Heart right ventricle (tissue), 16 donors: ENCODE measurements at regions of chr13 and their contacts with region 1.

Region 1: GRCh38 chr13:36395280-36395679 is 37.0 kb upstream of the CCNA1 start:
- DNase-seq: no peak
- ATAC-seq: peak in 4 of 8 donors; percentile 33 to 74 (median 67)
- H3K4me3 ChIP-seq: no peak overlapping the region
- H3K27ac ChIP-seq: no peak overlapping the region
- H3K4me1 ChIP-seq: no peaks in the 10 kb centered on the region
- H3K27me3 ChIP-seq: peaks cover 0 to 6% (median 0%) of the 10 kb centered on the region in 7 donors
- CTCF ChIP-seq: peak in 8 of 9 donors; percentile 24 to 56 (median 50)

Region 2: GRCh38 chr13:36282818-36283445 is 112.3 kb before region 1 on chr13:
- intact Hi-C with region 1: loop called in 8 of 10 experiments (anchors 2 to 10 kb)
- DNase-seq: no peak
- ATAC-seq: peak in 2 of 8 donors; percentile 57 to 61
- H3K4me3 ChIP-seq: no peak overlapping the region
- H3K27ac ChIP-seq: no peak overlapping the region
- H3K4me1 ChIP-seq: peaks cover 0 to 4% (median 0%) of the 10 kb centered on the region in 9 donors
- H3K27me3 ChIP-seq: no peaks in the 10 kb centered on the region
- CTCF ChIP-seq: peak; percentile 55 to 86 (median 79)

Region 3: DNA sequence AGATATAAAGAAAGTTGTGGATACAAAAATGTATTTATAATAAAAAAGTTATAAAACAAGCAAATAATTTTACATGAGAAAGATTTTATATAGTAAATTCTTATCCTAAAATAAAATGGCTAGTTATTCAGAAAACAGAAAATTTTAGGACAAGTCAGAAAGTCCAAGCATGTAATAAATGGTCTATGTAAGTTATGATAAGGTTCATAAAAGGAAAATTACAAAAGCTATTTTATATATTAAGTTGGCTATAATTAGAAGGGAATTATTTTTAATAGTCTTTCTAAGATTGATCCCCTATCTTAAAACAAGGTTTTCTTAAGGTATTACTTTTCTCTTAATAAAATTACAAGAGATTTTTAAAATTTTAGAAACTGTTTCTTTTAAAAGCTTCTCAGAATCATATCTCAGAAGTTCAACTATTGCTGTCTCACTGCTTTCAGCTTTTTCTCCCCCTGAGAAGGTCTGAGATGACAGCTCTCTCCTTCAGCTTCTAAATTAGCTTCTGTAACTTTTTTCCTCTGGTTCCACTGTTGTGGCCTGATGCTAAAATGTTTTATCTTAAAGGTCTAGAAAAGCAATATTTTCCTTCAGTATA is 106.4 kb before region 1 on chr13:
- intact Hi-C with region 1: loop called in 7 of 10 experiments (anchors 5 to 10 kb)
- DNase-seq: no peak
- ATAC-seq: no peak
- H3K4me3 ChIP-seq: no peak overlapping the region
- H3K27ac ChIP-seq: no peak overlapping the region
- H3K4me1 ChIP-seq: no peaks in the 10 kb centered on the region
- H3K27me3 ChIP-seq: peaks cover 0 to 3% (median 0%) of the 10 kb centered on the region in 7 donors
- CTCF ChIP-seq: no peak

Region 4: DNA sequence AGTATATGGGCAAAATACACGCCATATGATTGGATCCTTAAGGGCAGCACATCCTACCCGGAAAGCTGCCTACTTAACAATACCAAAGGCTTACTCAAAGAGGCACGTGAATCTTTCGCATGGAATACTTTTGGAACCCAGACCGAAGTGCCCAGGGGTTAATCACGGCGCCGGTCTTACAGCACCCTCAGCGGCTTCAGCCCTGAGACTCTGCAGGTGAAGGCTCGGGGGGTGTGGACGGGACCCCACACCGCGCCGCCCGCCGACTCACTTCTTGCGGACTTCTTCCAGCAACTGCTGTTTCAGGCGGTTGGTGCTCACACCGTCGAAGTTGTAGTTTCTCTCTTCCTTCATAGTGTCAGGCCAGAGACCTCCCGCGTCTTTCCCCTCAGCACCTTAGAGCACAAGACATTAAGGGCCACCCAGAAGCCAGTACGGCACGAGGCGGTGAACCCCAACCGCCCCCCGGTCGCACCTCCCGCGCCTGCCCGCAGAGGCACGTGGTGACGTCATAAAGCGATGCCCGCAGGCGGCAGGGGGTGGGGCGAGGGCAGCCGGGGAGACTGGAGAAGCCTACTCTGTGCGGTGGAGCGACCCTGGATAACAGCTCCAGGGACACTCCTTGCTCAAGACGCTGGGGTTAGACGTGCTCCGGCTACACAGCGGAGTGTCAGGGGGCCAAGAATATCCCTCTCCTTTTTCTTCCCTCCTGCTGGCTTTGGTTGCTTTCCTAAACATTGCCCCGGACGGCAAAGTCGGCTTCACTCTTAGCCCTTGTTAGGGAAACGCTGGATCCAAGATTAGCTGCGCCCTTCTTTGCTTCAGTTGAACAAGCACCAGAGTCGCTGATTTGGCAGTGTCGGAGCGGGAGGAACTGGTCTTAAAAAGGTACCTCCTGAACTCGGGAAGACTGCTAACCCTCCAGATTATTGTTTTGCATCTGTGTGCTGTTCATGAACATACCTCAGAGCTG is 97.6 kb before region 1 on chr13 and contains the start of gene CCDC169:
- intact Hi-C with region 1: loop called in 1 of 10 experiments (anchors 10 kb)
- DNase-seq: peak; percentile 58 to 67
- ATAC-seq: peak; percentile 79 to 98 (median 92)
- H3K4me3 ChIP-seq: peak within 1 kb of the TSS; percentile 26 to 73 (median 65)
- H3K27ac ChIP-seq: peak within 1 kb of the TSS in 5 of 10 donors; percentile 32 to 63 (median 52)
- H3K4me1 ChIP-seq: peaks cover 2 to 18% (median 9%) of the 10 kb centered on the region in 9 donors
- H3K27me3 ChIP-seq: peaks cover 0 to 5% (median 0%) of the 10 kb centered on the region in 7 donors
- CTCF ChIP-seq: no peak
- total RNA-seq, gene CCDC169: 0.15 to 5.4 (median 2.2) TPM

Region 5: GRCh38 chr13:36346222-36347083 is 48.8 kb before region 1 on chr13 and contains the start of gene SPART:
- intact Hi-C with region 1: loop called in 2 of 10 experiments (anchors 5 kb)
- DNase-seq: peak; percentile 91 to 93
- ATAC-seq: peak; percentile 91 to 96 (median 94)
- H3K4me3 ChIP-seq: peak within 1 kb of the TSS; percentile 62 to 93 (median 72)
- H3K27ac ChIP-seq: peak within 1 kb of the TSS; percentile 87 to 99 (median 96)
- H3K4me1 ChIP-seq: peaks cover 0 to 45% (median 26%) of the 10 kb centered on the region in 9 donors
- H3K27me3 ChIP-seq: no peaks in the 10 kb centered on the region
- CTCF ChIP-seq: peak; percentile 92 to 100 (median 98)
- total RNA-seq, gene SPART: 29.3 to 49.8 (median 38.5) TPM

Region 6: DNA sequence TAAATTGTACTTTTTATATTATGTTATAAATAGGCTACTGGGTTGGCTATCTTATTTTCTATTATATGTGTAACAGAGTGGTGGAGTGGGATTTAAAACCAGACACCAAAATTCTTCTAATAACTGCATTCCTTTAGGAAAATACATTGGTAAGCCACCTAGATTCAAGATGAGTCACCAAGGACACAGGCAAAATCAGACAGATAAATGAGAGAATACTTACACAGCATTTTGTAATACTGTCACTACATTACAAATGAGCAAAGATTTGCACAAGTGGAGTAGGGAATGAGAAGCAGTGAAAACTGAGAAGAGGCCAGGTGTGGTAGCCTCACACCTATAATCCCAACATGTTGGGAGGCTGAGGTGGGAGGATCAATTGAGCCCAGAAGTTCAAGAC is 42.9 kb before region 1 on chr13:
- intact Hi-C with region 1: loop called in 2 of 10 experiments (anchors 5 kb)
- DNase-seq: no peak
- ATAC-seq: no peak
- H3K4me3 ChIP-seq: no peak overlapping the region
- H3K27ac ChIP-seq: no peak overlapping the region
- H3K4me1 ChIP-seq: peaks cover 0 to 10% (median 0%) of the 10 kb centered on the region in 9 donors
- H3K27me3 ChIP-seq: no peaks in the 10 kb centered on the region
- CTCF ChIP-seq: no peak